Gastrocnemius medialis (tissue), 4 donors: ENCODE measurements at regions of chr16 and their contacts with region 1.

Region 1: GRCh38 chr16:84959784-84960417 is 51.4 kb downstream of the ZDHHC7 start:
- DNase-seq: no peak
- ATAC-seq: no peak
- H3K4me3 ChIP-seq: no peak overlapping the region
- H3K27ac ChIP-seq: no peak overlapping the region
- H3K4me1 ChIP-seq: no peaks in the 10 kb centered on the region
- H3K27me3 ChIP-seq: no peaks in the 10 kb centered on the region
- CTCF ChIP-seq: no peak
- POLR2A ChIP-seq: no peak

Region 2: DNA sequence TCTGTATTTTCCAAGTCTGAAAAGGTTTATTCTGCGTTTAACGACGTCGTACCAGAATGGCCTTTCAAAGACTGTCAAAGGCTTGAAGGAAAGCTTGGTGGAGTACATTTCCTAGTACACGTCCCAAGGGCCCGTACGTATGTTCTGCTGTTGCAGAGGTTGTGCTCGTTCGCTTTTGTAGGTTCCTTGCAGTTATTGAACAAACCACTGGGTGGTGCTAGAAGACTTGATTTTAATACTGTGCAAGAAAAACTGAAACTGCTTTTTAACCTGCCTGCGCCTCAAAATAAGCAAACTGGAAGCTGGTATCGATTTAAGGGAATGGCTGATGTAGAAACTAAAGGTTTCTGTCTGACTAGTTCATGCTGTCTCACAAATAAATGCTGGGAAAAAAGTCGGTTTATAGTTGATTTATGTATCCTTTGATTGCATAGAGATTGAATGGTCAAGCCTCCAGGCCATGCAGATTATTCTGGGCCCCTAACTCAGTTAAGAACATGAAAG is 205.5 kb before region 1 on chr16:
- in situ Hi-C with region 1: loop called in 2 of 4 experiments (anchors 5 to 10 kb)
- intact Hi-C with region 1: no loop called
- DNase-seq: peak; percentile 42 to 64
- ATAC-seq: peak; percentile 63 to 87
- H3K4me3 ChIP-seq: no peak overlapping the region
- H3K27ac ChIP-seq: no peak overlapping the region
- H3K4me1 ChIP-seq: peaks cover 28 to 37% of the 10 kb centered on the region in 2 donors
- H3K27me3 ChIP-seq: no peaks in the 10 kb centered on the region
- CTCF ChIP-seq: peak; percentile 72 to 84 (median 82)
- POLR2A ChIP-seq: no peak

Region 3: DNA sequence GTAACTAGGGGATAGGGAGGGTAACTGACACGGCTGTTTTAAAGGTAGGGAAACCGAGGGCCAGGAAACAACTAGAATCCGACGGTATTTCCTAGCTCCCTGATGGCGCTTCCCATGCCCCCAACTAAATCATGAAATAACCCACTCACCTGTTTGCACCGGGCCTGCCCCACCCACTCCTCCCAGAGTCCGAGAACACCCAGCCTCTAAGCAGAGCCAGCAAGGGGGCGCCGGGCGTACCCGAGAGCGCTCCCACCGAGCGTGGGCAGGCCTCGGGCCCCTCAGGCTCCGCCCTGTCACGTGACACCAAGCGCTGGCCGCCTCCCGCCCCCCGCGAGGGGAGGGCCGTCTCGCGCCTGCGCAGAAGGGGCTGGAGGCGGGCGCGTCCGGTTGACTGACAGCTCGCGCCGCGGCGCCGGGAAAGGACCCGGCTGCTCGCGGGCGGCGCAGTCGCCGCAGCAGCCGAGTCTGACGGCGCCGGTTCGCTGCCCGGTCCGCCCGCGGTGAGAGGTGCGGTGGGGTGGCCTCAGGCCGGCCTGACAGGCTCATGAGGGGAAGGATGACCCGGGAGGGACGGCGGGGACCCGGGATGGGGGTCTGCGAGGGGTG is 67.6 kb after region 1 on chr16 and contains the start of gene KIAA0513:
- in situ Hi-C with region 1: no loop called
- intact Hi-C with region 1: no loop called
- DNase-seq: peak; percentile 88 to 89
- ATAC-seq: peak; percentile 83 to 85
- H3K4me3 ChIP-seq: peak within 1 kb of the TSS; percentile 76 to 94 (median 86)
- H3K27ac ChIP-seq: peak within 1 kb of the TSS; percentile 80 to 94 (median 92)
- H3K4me1 ChIP-seq: peaks cover 22 to 31% of the 10 kb centered on the region in 2 donors
- H3K27me3 ChIP-seq: no peaks in the 10 kb centered on the region
- CTCF ChIP-seq: peak in 4 of 5 experiments; percentile 29 to 56 (median 38)
- POLR2A ChIP-seq: peak; percentile 96 to 97
- total RNA-seq, gene KIAA0513: 8.2 to 22.4 (median 21.4) TPM

Region 4: GRCh38 chr16:85090873-85091521 is 131.1 kb after region 1 on chr16:
- in situ Hi-C with region 1: no loop called
- intact Hi-C with region 1: no loop called
- DNase-seq: no peak
- ATAC-seq: no peak
- H3K4me3 ChIP-seq: no peak overlapping the region
- H3K27ac ChIP-seq: no peak overlapping the region
- H3K4me1 ChIP-seq: no peaks in the 10 kb centered on the region
- H3K27me3 ChIP-seq: peaks cover 0 to 16% (median 4%) of the 10 kb centered on the region in 3 donors
- CTCF ChIP-seq: no peak
- POLR2A ChIP-seq: no peak